SK-N-SH (cell line): ENCODE measurements at regions of chr12 and their contacts with region 1.

Region 1: GRCh38 chr12:1605129-1606020 is 11.0 kb upstream of the FBXL14 start:
- DNase-seq: peak; percentile 79
- H3K4me3 ChIP-seq: peak overlapping the region; percentile 29 to 64
- H3K27ac ChIP-seq: peak overlapping the region; percentile 64 to 92
- H3K4me1 ChIP-seq: peaks cover 9 to 33% of the 10 kb centered on the region in 2 experiments; a peak in 3 of 4 replicates
- H3K27me3 ChIP-seq: no peaks in the 10 kb centered on the region
- CTCF ChIP-seq: peak; percentile 80
- EP300 ChIP-seq: 0 out of 4 replicates have a peak, but pooled peaks of 1 of the 2 experiments have one; percentile 27
- RAD21 ChIP-seq: peak; percentile 87

Region 2: DNA sequence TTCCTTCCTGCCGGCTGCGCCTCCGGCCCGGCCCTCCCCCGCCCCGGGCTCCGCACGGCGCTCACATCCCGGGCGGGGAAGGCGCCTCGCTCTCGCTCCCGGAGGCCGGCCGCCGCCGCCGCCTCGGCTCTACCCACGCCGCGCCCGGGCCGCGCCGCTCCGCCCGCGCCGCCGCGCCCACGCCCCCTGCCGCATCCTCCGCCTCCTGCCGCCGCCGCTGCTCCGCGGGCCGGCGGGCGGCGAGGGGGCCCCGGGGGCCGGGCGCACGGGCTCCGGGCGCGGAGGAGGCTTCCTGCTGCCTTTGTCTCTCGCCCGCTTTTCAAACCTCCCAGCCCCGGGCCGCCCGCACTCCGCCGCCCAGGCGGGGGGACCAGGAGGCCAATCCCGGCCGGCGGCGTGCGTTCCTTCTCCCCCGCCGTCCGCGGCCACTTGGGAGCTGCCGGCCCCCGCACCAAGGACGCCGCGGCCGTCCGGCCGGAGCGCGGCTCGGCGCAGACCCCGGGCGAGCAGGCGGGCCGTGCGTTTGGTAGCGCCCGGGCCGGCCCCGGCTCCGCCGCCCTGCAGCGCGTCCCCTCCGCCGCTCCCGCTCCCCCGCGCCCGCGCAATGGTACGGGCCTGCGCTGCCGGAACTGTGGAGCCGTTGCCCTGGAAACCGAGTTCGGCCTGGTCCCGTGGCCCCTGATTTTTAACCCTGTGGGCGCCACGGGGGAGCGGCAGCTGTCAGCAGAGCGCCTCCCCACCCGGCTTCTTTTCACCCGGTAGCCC is 10.9 kb before region 1 on chr12 and contains the start of gene FBXL14:
- CTCF ChIA-PET with region 1: interaction called, 34 read pairs
- POLR2A ChIA-PET with region 1: interaction called, 4 read pairs
- DNase-seq: peak; percentile 92
- H3K4me3 ChIP-seq: peak within 1 kb of the TSS; percentile 76 to 80
- H3K27ac ChIP-seq: peak within 1 kb of the TSS; percentile 65 to 95
- H3K4me1 ChIP-seq: peaks cover 30 to 33% of the 10 kb centered on the region in 2 experiments
- H3K27me3 ChIP-seq: no peaks in the 10 kb centered on the region
- CTCF ChIP-seq: no peak
- EP300 ChIP-seq: no peak
- RAD21 ChIP-seq: no peak
- polyA plus RNA-seq, gene FBXL14: 11.3 and 12.8 TPM in 2 replicates

Region 3: GRCh38 chr12:1622406-1622805 is 17.0 kb after region 1 on chr12:
- CTCF ChIA-PET with region 1: interaction called, 30 read pairs
- POLR2A ChIA-PET with region 1: no interaction called
- DNase-seq: no peak
- H3K4me3 ChIP-seq: no peak overlapping the region
- H3K27ac ChIP-seq: no peak overlapping the region
- H3K4me1 ChIP-seq: peaks cover 0 to 9% of the 10 kb centered on the region in 2 experiments; a peak in 1 of 4 replicates
- H3K27me3 ChIP-seq: no peaks in the 10 kb centered on the region
- CTCF ChIP-seq: no peak
- EP300 ChIP-seq: no peak
- RAD21 ChIP-seq: no peak

Region 4: GRCh38 chr12:2583091-2583497 is 977.7 kb after region 1 on chr12:
- CTCF ChIA-PET with region 1: no interaction called
- POLR2A ChIA-PET with region 1: no interaction called
- DNase-seq: peak; percentile 92
- H3K4me3 ChIP-seq: peak overlapping the region in 1 of 2 experiments; percentile 26; a peak in 2 of 4 replicates
- H3K27ac ChIP-seq: no peak overlapping the region
- H3K4me1 ChIP-seq: peaks cover 0 to 24% of the 10 kb centered on the region in 2 experiments; a peak in 1 of 4 replicates
- H3K27me3 ChIP-seq: no peaks in the 10 kb centered on the region
- CTCF ChIP-seq: peak; percentile 76
- EP300 ChIP-seq: no peak; a peak in 1 of 4 replicates
- RAD21 ChIP-seq: peak; percentile 87